Posterior cingulate gyrus (tissue), 11 donors: ENCODE measurements at regions of chr5 and their contacts with region 1.

Region 1: DNA sequence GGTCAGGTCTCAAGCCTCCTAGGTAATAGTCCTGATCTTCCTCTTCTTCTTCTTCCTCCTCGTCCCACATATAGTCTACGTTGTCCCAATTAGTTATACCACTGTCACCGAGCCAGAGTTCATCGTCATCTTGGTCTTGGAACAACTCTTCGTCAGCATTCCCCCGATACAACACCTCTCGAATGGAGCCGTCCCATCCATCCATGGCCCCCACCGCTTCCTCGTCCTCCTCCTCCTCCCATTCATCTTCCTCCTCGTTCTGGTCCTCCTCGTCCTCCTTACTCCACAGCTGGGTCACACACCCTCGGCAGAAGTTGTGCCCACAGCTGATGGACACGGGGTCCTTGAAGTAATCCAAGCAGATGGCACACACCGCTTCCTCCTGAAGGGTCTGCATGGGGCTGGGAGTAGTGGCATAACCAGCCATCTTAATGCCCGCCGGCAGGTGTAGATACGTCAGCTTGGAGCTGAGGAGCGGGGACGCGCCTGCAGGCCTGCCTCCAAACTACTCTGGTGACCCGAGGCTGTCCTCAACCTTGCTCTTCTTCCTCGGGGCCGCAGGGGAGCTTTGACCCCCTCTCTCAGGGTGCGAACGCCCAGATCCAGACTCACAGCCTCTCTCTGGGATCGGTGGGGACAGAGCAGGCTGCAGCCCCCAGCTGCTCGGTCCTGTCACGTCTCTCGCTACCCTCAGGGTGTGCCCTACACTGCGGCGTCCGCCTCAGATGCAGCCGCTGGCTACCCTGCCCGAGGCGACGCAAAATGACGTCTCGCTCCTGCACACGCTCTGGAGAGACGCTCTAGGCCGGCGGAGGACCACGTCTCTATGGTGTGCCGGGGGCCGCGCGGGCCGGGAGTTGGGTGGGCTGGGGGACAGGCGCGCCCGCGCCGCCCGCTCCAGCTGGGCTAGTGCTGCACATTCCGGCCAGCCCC is at the start of gene TRIM52:
- DNase-seq: peak; percentile 80 to 99 (median 92)

Region 2: DNA sequence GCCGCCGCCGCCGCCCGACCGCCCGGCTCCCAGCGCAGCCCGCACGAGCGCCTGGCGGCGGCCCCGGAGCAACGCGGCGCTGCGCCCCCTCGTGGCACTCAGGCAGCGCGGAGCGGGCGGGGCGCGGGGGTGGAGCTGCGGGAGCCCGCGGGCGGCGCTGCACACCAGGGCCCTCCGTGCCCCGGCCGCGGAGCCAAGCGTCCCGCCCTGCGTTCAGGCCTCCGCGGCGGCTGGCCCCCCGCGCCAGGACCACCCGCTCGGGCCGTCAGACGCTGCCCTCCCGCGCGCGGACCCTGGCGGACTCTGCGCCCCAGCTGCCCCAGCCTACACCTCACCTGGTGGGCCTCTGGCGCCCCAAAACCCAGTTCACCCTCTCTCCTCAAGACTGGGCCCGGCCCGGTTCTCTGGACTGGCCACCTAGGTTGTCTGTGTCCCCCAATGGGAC is 1051.5 kb before region 1 on chr5 and contains the start of gene RASGEF1C:
- intact Hi-C with region 1: no loop called
- DNase-seq: peak in 9 of 10 donors; percentile 39 to 95 (median 66)

Region 3: GRCh38 chr5:181088289-181088688 is 172.4 kb before region 1 on chr5:
- intact Hi-C with region 1: no loop called
- DNase-seq: peak in 1 of 10 donors; percentile 39

Region 4: GRCh38 chr5:181191529-181192394 is 68.9 kb before region 1 on chr5:
- intact Hi-C with region 1: loop called (anchors 5 kb)
- DNase-seq: peak; percentile 91 to 99 (median 94)

Region 5: GRCh38 chr5:181243512-181244343 is 16.9 kb before region 1 on chr5 and contains the start of gene RACK1:
- intact Hi-C with region 1: loop called (anchors 2 kb)
- DNase-seq: peak; percentile 84 to 98 (median 91)